ENCODE measurements at regions of chr16 and their contacts with region 1.

Region 1: DNA sequence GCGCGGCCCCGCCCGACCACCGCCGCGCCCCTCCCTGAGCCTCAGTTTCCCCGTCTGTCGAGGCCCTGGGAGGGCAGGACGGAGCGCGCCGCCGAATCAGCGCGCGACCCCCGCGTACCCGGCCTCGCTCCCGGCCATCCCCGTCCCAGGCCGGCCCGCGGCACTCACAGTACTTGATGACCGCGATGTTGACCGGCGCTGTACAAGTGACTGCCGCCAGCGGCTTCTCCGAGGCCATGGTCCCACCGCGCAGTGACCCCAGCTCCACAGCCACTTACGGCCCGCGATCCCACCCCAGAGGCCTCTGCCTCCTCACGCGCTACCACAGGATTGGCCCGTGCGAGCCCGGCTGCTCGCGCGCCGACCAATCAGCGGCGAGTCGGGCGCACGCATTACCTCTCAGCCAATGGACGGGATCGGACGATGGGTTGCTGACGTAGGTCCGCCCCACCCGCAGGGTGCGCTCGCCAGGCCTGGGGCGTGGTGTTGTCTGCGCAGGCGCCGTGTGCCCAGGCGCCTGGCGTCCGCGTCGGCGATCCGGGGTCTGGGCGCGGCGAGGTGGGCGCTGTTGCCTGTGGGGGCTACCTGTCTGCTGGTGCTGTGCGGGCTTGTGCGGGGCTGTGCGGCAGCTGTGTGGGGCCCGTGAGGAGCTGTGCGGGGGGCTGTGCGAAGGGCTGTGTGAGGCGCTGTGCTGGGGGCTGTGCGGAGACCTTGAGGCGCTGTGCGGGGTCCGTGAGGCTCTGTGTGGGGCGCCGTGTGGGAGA is at the start of gene MVD:
- DNase-seq: peak; percentile 98
- H3K4me3 ChIP-seq: peak within 1 kb of the TSS; percentile 89 to 100 (median 98)
- H3K27ac ChIP-seq: peak within 1 kb of the TSS; percentile 78
- H3K4me1 ChIP-seq: peaks cover 5% of the 10 kb centered on the region
- H3K27me3 ChIP-seq: no peaks in the 10 kb centered on the region
- CTCF ChIP-seq: no peak
- total RNA-seq, gene MVD: 57.7 to 171 TPM

Region 2: DNA sequence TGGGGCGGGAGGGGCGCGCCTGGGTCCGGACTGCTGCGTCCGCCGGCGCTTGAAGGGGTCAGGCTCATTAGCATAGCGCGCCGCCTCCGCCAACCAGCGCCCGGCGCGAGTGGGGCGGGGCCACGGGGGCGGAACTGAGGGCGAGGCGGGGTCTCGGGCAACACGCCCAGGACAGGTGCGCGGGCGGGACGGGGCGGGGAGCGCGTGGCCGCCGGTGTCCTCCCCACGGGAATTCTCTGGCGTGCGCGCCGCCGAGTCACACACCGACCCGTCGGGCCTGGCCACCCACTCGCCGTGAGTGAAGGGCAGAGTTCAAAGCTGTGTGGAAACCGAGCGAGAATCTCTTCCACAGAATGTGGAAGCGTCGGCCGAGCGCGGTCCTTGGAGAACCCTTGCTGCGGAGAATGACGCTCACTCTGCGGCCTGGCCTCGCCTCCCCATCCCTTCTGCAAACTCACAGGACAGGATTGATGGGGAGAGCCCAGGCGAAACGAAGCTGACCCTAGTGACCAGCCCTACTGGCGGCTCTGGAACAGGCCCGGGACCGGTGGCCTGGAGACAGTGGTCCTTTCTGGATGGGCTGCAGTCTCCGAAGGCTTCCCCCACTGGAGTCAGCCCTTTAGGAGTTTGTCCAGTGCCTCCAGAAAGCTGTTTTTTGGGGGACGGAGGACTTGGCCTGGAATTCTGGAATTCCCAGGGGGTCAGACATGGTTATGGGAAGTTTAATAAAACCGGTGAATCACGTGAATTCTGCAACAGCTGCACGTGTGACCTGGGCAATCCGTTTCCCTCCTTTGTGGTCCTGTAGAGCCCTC is 23.6 kb after region 1 on chr16 and contains the start of gene SNAI3:
- CTCF ChIA-PET with region 1: no interaction called
- dilution Hi-C with region 1: no loop called
- in situ Hi-C with region 1: no loop called
- intact Hi-C with region 1: loop called (anchors 1 kb)
- DNase-seq: peak; percentile 75
- H3K4me3 ChIP-seq: peak within 1 kb of the TSS; percentile 39 to 55 (median 46)
- H3K27ac ChIP-seq: no peak within 1 kb of the TSS
- H3K4me1 ChIP-seq: peaks cover 17% of the 10 kb centered on the region
- H3K27me3 ChIP-seq: no peaks in the 10 kb centered on the region
- CTCF ChIP-seq: no peak
- total RNA-seq, gene SNAI3: not detected

Measured in mammary epithelial cell (primary cell).